Common myeloid progenitor, CD34-positive (primary cell): ENCODE measurements at regions of chr15 and their contacts with region 1.

Region 1: GRCh38 chr15:63487076-63487757 is 17.2 kb upstream of the USP3 start:
- DNase-seq: peak; percentile 76 to 85 (median 80)
- H3K4me3 ChIP-seq: peak overlapping the region in 1 of 7 experiments; percentile 33
- H3K27ac ChIP-seq: no peak overlapping the region
- H3K4me1 ChIP-seq: peaks cover 9 to 35% (median 16%) of the 10 kb centered on the region in 4 experiments
- H3K27me3 ChIP-seq: no peaks in the 10 kb centered on the region

Region 2: GRCh38 chr15:63430766-63431449 is 56.3 kb before region 1 on chr15:
- CTCF ChIA-PET with region 1: no interaction called
- POLR2A ChIA-PET with region 1: no interaction called
- DNase-seq: no peak
- H3K4me3 ChIP-seq: no peak overlapping the region
- H3K27ac ChIP-seq: no peak overlapping the region
- H3K4me1 ChIP-seq: no peaks in the 10 kb centered on the region
- H3K27me3 ChIP-seq: no peaks in the 10 kb centered on the region

Region 3: DNA sequence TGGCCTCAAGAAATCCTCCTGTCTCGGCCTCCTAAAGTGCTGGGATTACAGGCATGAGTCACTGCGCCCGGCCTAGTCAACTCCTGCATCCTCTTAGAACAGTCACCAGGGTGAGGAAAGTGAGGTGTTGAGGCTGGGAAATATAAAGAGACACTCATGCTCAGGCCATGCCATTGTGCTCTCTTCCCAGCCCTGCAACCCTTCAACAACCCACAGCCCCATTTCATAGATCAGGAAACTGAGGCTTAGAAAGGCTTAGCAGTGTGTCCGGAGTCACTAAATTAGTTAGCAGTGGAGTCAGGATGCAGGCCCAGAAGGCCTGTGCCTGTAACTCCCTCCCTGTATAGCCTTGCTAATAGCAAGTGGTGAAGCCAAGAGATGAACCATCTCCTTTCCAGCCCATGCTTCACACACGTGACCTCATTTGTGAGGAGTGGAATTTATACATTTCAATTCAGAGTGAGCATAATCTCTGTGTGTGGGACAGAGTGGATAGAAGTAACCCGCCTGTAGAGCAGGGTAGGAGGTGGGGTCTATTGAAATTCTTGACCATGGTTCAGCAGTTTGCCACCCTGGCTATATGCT is 34.6 kb before region 1 on chr15:
- CTCF ChIA-PET with region 1: no interaction called
- POLR2A ChIA-PET with region 1: no interaction called
- DNase-seq: peak in 1 of 3 donors; percentile 23
- H3K4me3 ChIP-seq: no peak overlapping the region
- H3K27ac ChIP-seq: no peak overlapping the region
- H3K4me1 ChIP-seq: peaks cover 3 to 56% (median 35%) of the 10 kb centered on the region in 4 experiments
- H3K27me3 ChIP-seq: no peaks in the 10 kb centered on the region

Region 4: GRCh38 chr15:63474810-63475319 is 12.4 kb before region 1 on chr15:
- CTCF ChIA-PET with region 1: interaction called, 12 read pairs
- POLR2A ChIA-PET with region 1: interaction called, 3 read pairs
- DNase-seq: no peak
- H3K4me3 ChIP-seq: no peak overlapping the region
- H3K27ac ChIP-seq: no peak overlapping the region
- H3K4me1 ChIP-seq: peaks cover 5 to 10% (median 8%) of the 10 kb centered on the region in 4 experiments
- H3K27me3 ChIP-seq: no peaks in the 10 kb centered on the region

Region 5: DNA sequence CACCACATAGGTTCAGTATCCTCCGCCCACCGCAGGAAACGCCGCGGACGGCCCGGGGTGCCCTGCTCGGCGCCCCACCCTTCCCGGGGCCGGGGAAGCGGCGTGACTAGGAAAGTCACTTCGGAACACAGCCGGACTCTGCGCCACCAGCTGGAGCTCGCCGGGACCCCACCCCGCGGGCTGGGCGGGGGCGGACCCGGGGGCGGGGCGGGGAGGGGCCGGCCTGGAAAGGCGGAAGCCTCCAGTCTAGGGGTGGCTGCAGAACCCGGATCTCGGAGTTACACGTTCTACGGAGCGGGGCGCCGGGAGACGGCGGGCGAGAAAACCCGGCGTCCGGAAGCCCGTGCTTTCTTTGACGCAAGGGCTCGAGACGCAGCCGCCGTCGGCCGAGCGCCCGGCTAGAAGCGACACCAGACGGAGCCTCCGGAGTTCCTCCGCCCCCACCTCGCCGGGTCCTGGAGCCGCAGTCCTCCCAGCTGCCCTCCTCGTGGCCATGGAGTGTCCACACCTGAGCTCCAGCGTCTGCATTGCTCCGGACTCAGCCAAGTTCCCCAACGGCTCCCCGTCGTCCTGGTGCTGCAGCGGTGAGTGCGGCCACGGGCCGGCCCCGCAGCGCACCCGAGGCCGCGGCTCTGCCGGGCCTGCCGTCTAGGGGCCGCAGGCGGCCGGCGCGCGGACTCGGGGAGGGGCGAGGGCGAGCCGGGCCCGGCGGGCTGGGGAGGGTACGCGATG is 17.2 kb after region 1 on chr15 and contains the start of gene USP3:
- CTCF ChIA-PET with region 1: interaction called, 12 read pairs
- POLR2A ChIA-PET with region 1: no interaction called
- DNase-seq: peak; percentile 94 to 97 (median 96)
- H3K4me3 ChIP-seq: peak within 1 kb of the TSS; percentile 65 to 90 (median 85)
- H3K27ac ChIP-seq: peak within 1 kb of the TSS; percentile 55 to 90
- H3K4me1 ChIP-seq: peaks cover 28 to 70% (median 48%) of the 10 kb centered on the region in 4 experiments
- H3K27me3 ChIP-seq: peaks cover 0 to 3% (median 0%) of the 10 kb centered on the region in 5 experiments

Region 6: DNA sequence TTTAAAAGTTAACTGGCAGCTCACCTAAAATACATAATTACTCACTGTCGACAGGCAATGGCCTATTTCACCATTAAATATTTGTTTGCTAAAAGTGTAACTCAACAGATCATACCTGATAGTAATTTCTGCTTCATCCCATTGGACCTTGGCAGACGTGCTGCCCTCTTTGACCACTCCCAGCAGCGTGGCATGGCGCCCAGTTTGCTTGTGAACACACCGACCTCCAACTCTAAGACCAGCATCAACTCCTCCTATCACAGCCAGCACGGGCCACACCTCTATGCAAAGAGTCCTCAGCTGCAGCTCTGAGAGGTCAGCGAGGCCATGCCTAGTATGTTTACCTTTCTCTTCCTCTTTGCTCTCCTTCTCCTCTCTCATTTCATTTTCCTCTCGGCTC is 190.5 kb after region 1 on chr15:
- CTCF ChIA-PET with region 1: no interaction called
- POLR2A ChIA-PET with region 1: no interaction called
- DNase-seq: no peak
- H3K4me3 ChIP-seq: no peak overlapping the region
- H3K27ac ChIP-seq: no peak overlapping the region
- H3K4me1 ChIP-seq: no peaks in the 10 kb centered on the region
- H3K27me3 ChIP-seq: no peaks in the 10 kb centered on the region